PC-9 (cell line): ENCODE measurements at regions of chr1 and their contacts with region 1.

Region 1: DNA sequence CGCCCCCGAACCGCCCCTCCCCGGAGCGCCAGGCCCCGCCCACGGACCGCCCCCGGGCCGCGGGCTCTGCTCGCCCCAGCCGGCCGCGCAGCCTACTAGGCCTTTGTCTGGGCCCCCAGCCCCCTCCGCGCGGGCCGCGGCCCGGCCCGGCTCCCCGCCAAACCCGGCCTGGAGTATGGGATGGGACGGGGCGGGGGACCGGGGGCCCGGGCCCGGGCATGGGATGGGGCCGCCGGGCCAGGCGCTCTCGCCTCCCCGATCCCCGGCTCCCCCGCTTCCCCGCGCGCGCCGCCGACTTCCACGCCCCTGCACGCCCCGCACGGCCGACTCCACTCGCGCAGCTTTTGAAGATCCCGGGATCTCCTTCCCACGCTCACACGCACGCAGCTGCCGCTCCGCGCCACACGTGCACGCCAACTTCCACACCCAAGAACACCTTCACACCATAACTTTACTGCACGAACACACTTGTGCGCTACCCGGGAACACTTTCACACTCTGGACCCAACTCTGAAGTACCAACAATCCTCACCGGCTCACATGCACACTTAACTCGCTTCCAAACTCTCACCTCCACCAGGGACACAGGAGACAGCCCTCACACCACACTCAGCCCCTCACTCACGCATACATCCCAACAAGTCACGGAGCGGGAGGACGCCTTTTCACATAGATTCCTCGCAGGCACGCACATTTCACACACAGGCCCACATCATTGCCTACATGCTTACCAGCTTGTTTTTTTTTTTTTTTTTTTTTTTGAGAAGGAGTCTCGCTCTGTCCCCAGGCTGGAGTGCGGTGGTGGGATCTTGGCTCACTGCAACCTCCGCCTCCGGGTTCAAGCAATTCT is 487 bp upstream of the HSPG2 start:
- DNase-seq: peak in 1 of 2 experiments; percentile 74
- H3K4me3 ChIP-seq: peak overlapping the region; percentile 46; the same call in 1 of the 2 replicates
- H3K27ac ChIP-seq: no peak overlapping the region
- H3K4me1 ChIP-seq: peaks cover 44% of the 10 kb centered on the region
- H3K27me3 ChIP-seq: no peaks in the 10 kb centered on the region
- CTCF ChIP-seq: no peak

Region 2: GRCh38 chr1:21869620-21870121 is 67.9 kb before region 1 on chr1:
- CTCF ChIA-PET with region 1: no interaction called
- POLR2A ChIA-PET with region 1: no interaction called
- intact Hi-C with region 1: loop called (anchors 5 kb)
- DNase-seq: peak; percentile 92 to 98
- H3K4me3 ChIP-seq: no peak overlapping the region
- H3K27ac ChIP-seq: no peak overlapping the region
- H3K4me1 ChIP-seq: peaks cover 37% of the 10 kb centered on the region
- H3K27me3 ChIP-seq: no peaks in the 10 kb centered on the region
- CTCF ChIP-seq: no peak

Region 3: GRCh38 chr1:22184892-22185612 is 247.5 kb after region 1 on chr1:
- CTCF ChIA-PET with region 1: no interaction called
- POLR2A ChIA-PET with region 1: no interaction called
- intact Hi-C with region 1: no loop called
- DNase-seq: no peak
- H3K4me3 ChIP-seq: no peak overlapping the region
- H3K27ac ChIP-seq: no peak overlapping the region
- H3K4me1 ChIP-seq: no peaks in the 10 kb centered on the region
- H3K27me3 ChIP-seq: no peaks in the 10 kb centered on the region
- CTCF ChIP-seq: no peak